ENCODE measurements at regions of chr14 and their contacts with region 1.

Region 1: DNA sequence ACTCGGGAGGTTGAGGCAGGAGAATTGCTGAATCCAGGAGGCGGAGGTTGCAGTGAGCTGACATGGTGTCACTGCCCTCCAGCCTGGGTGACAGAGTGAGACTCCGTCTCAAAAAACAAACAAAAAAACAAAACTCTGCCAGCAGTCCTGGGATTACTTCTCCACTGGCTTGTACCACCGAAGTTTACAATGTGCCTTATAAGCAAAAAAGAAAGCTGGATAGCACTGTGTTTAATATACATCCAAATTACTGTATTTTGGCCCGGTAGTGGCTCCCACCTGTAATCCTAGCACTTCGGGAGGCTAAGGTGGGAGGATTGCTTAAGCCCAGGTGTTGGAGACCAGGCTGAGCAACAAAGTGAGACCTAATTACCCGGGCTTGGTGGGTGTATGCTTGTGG is 16.7 kb downstream of the HOMEZ start:
- DNase-seq: no peak
- ATAC-seq: no peak
- H3K4me3 ChIP-seq: no peak overlapping the region
- H3K27ac ChIP-seq: no peak overlapping the region
- H3K4me1 ChIP-seq: no peaks in the 10 kb centered on the region
- H3K27me3 ChIP-seq: no peaks in the 10 kb centered on the region
- CTCF ChIP-seq: no peak
- POLR2A ChIP-seq: no peak
- RAD21 ChIP-seq: no peak

Region 2: DNA sequence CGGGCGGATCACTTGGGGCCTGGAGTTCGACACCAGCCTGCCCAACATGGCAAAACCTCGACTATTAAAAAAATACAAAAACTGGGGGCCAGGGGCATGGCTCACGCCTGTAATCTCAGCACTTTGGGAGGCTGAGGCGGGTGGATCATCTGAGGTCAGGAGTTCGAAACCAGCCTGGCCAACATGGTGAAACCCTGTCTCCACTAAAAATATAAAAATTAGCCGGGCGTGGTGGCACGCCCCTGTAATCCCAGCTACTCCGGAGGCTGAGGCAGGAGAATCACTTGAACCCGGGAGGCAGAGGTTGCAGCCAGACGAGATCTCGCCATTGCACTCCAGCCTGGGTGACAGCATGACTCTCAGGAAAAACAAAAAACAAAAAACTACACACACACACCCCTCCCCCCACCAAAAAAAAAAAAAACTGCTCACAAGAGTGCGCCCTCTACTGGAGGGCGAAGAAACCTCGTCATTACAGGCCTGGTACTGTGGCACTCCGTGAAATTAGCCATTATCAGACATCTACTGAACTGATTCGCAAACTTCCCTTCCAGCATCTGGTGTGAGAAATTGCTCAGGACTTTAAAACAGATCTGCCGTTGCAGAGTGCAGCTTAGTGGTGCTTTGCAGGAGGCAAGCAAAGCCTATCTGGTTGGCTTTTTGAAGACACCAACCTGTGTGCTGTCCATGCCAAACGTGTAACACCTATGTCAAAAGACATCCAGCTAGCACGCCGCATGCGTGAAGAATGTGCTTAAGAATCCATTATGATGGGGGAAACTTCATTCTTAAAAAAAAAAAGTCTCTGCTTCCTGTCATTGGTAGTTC is 25.8 kb after region 1 on chr14:
- CTCF ChIA-PET with region 1: no interaction called
- POLR2A ChIA-PET with region 1: interaction called, 3 read pairs
- dilution Hi-C with region 1: no loop called
- in situ Hi-C with region 1: no loop called
- intact Hi-C with region 1: loop called (anchors 1 kb)
- DNase-seq: peak; percentile 51
- ATAC-seq: peak; percentile 79
- H3K4me3 ChIP-seq: no peak overlapping the region
- H3K27ac ChIP-seq: no peak overlapping the region
- H3K4me1 ChIP-seq: peaks cover 2% of the 10 kb centered on the region
- H3K27me3 ChIP-seq: peaks cover 3% of the 10 kb centered on the region; the same call in 1 of the 2 replicates
- CTCF ChIP-seq: peak; percentile 87
- POLR2A ChIP-seq: no peak
- RAD21 ChIP-seq: peak; percentile 45

Region 3: DNA sequence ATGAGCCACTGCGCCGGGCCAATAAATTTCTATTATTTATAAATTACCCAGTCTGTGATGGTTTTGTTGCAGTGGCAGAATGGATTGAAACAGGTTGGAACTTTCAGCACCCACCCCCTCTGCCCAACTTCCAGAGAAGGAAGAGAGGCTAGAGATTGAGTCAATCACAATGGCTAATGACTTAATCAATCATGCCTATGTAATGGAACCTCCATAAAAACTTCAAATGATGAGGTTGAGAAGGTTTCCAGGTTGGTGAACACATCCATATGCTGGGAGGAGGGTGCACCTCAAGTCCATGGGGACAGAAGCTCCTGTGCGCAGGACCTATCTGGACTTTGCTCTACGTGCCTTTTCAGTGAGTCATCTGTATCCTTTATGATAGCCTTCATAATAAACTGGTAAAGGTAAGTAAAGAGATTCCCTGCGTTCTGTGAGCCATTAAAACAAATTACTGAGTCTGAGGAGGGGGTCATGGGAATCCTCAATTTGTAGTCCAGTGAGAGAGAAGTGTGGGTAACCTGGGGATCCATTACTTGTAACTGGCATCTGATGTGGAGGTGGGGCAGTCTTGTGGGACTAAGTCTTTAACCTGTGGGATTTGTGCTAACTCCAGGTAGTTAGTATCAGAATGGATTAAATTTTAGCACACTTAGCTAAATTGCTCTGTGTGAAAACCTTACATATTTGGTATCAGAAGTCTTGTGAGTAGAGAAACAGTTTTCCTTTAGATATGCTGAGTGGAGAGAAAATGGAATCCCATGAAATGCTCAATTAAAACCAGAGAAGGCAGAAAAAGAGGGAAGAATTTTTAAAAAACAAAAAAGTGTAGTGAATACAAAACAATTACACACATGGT is 188.6 kb after region 1 on chr14:
- CTCF ChIA-PET with region 1: no interaction called
- POLR2A ChIA-PET with region 1: no interaction called
- dilution Hi-C with region 1: no loop called
- in situ Hi-C with region 1: loop called (anchors 10 kb)
- intact Hi-C with region 1: loop called (anchors 5 kb)
- DNase-seq: no peak
- ATAC-seq: no peak
- H3K4me3 ChIP-seq: no peak overlapping the region
- H3K27ac ChIP-seq: no peak overlapping the region
- H3K4me1 ChIP-seq: no peaks in the 10 kb centered on the region
- H3K27me3 ChIP-seq: no peaks in the 10 kb centered on the region
- CTCF ChIP-seq: no peak
- POLR2A ChIP-seq: no peak
- RAD21 ChIP-seq: no peak

Region 4: DNA sequence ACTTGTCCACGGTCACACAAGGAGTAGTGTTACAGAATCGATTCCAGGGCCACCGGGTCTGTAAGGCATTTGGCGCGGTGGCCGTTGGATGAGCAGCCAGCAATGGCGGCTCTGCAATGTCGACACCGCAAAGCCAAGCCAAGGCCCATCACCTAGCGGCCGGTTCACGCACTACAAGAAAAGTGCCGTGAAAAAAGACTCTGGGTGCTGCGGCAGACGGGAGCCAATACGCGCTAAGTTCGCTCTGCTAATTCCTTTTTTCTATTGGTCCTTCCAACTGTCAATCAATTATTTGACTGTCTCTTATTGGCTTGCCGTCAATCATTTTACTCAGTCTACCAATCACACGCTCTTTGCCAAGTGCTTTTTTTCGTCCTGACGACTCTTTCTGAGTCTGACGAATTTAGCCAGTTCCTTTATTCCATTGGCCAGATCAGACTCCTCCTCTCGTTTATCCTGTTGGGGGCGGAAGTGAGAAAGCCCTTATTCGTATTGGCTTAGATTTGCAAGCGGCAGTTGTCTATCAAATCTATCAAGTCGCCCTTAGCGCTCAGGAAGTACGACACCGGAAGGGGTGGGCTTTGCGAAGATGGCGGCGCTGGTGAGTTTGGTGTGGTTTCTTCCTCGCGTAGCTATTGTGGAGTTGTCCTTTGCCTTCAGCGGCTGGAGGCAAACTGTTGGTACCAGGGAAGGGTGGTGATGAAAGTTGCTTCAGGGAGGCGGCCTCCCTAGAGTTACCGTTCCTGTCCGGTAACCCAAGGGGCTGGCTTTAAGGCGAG is 200.1 kb after region 1 on chr14 and contains the start of gene NGDN:
- CTCF ChIA-PET with region 1: no interaction called
- POLR2A ChIA-PET with region 1: no interaction called
- dilution Hi-C with region 1: no loop called
- in situ Hi-C with region 1: loop called (anchors 10 kb)
- intact Hi-C with region 1: no loop called
- DNase-seq: peak; percentile 100
- ATAC-seq: peak; percentile 98
- H3K4me3 ChIP-seq: peak within 1 kb of the TSS; percentile 81
- H3K27ac ChIP-seq: peak within 1 kb of the TSS; percentile 69
- H3K4me1 ChIP-seq: no peaks in the 10 kb centered on the region
- H3K27me3 ChIP-seq: no peaks in the 10 kb centered on the region
- CTCF ChIP-seq: peak; percentile 83
- POLR2A ChIP-seq: peak; percentile 90
- RAD21 ChIP-seq: peak; percentile 51
- total RNA-seq, gene NGDN: 49.8 and 50.0 TPM in 2 replicates

Region 5: GRCh38 chr14:24042746-24043145 is 773.6 kb after region 1 on chr14:
- CTCF ChIA-PET with region 1: no interaction called
- POLR2A ChIA-PET with region 1: no interaction called
- dilution Hi-C with region 1: no loop called
- in situ Hi-C with region 1: no loop called
- intact Hi-C with region 1: no loop called
- DNase-seq: no peak
- ATAC-seq: no peak
- H3K4me3 ChIP-seq: no peak overlapping the region
- H3K27ac ChIP-seq: no peak overlapping the region
- H3K4me1 ChIP-seq: no peaks in the 10 kb centered on the region
- H3K27me3 ChIP-seq: peaks cover 13% of the 10 kb centered on the region
- CTCF ChIP-seq: no peak
- POLR2A ChIP-seq: no peak
- RAD21 ChIP-seq: no peak

Measured in IMR-90 (cell line).